Activated naive CD4-positive, alpha-beta T cell treated with anti-CD3 and anti-CD28 coated beads for 36 hours (primary cell): ENCODE measurements at regions of chr3 and their contacts with region 1.

Region 1: GRCh38 chr3:151918253-151919029 is 45.0 kb downstream of the SUCNR1 start:
- DNase-seq: no peak
- H3K4me3 Mint-ChIP-seq: no peak overlapping the region
- H3K27ac Mint-ChIP-seq: no peak overlapping the region
- H3K4me1 Mint-ChIP-seq: no peaks in the 10 kb centered on the region
- H3K27me3 Mint-ChIP-seq: no peaks in the 10 kb centered on the region

Region 2: GRCh38 chr3:151439652-151440129 is 478.8 kb before region 1 on chr3:
- CTCF ChIA-PET with region 1: interaction called, 11 read pairs
- intact Hi-C with region 1: loop called (anchors 1 kb)
- DNase-seq: no peak
- H3K4me3 Mint-ChIP-seq: no peak overlapping the region
- H3K27ac Mint-ChIP-seq: no peak overlapping the region
- H3K4me1 Mint-ChIP-seq: no peaks in the 10 kb centered on the region
- H3K27me3 Mint-ChIP-seq: peaks cover 2% of the 10 kb centered on the region

Region 3: GRCh38 chr3:151468284-151468917 is 450.0 kb before region 1 on chr3:
- CTCF ChIA-PET with region 1: interaction called, 4 read pairs
- intact Hi-C with region 1: loop called (anchors 1 kb)
- DNase-seq: peak; percentile 40
- H3K4me3 Mint-ChIP-seq: no peak overlapping the region
- H3K27ac Mint-ChIP-seq: no peak overlapping the region
- H3K4me1 Mint-ChIP-seq: no peaks in the 10 kb centered on the region
- H3K27me3 Mint-ChIP-seq: peaks cover 4% of the 10 kb centered on the region

Region 4: DNA sequence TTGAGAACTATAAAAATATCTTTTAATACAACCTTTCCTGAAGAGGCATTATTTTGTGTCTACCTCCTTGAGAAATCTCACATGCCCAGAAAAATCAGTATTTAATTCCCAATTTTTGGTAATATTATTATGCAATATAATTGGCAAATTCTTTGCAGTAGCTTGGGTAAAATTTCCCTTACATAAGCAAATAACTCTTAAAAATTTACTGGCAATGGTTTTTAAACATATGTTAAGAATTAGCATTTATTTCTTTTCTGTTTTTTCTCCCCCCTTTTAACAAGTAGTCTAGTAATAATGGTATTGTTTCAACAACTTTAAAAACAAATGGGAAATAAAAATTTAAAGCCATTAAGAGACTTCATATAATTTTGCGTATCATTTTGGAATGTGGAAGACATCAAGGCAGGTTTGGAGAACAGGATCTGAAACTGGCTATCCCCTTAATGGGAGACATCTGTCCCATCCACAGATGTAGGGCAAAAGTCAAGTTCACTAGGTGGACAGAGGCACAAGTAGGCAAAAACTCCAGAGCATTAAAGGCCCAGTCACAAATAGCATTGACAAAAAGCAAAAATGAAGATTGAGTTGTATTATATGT is 274.3 kb before region 1 on chr3:
- CTCF ChIA-PET with region 1: no interaction called
- intact Hi-C with region 1: loop called (anchors 10 kb)
- DNase-seq: no peak
- H3K4me3 Mint-ChIP-seq: no peak overlapping the region
- H3K27ac Mint-ChIP-seq: no peak overlapping the region
- H3K4me1 Mint-ChIP-seq: no peaks in the 10 kb centered on the region
- H3K27me3 Mint-ChIP-seq: peaks cover 6% of the 10 kb centered on the region

Region 5: GRCh38 chr3:151838583-151839312 is 79.7 kb before region 1 on chr3:
- CTCF ChIA-PET with region 1: interaction called, 6 read pairs
- intact Hi-C with region 1: loop called (anchors 1 kb)
- DNase-seq: peak; percentile 53
- H3K4me3 Mint-ChIP-seq: no peak overlapping the region
- H3K27ac Mint-ChIP-seq: no peak overlapping the region
- H3K4me1 Mint-ChIP-seq: peaks cover 2% of the 10 kb centered on the region
- H3K27me3 Mint-ChIP-seq: no peaks in the 10 kb centered on the region

Region 6: DNA sequence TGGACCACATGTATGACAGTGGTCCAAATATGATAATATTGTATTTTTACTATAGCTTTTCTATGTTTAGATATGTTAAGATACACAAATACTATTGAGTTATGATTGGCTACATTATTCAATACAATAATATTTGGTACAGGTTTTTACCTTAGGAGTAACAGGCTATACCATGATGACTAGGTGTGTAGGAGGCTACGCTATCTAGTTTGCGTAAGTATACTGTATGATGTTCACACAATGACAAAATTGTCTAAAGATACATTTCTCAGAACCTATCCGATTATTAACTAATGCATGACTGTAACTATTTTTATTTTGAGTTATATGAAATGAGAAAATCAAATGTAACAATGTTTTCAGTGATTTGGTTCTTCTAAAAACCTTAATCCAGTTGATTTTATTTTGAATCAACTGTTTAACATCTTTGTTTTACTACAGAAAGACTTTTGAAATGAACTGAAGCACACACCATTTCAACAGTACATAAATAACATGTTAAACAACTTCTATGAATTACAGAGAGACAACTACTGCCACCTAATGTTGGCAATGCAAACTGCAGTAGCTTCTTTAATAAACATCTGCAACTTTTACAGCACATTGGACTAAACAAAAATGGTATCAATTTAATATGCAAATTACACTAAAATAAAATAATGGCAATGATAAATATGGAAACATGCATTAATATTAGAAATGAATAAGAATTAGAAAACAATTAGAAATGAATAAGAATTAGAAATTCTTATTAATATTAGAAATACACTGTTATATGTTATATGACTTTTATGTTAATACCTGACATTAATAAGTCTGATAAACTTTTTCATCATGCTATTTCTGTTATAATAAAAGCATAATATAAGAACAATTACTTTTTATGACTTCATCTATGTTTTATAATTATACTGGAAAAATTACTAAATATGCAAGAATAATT is 606.0 kb after region 1 on chr3:
- CTCF ChIA-PET with region 1: no interaction called
- intact Hi-C with region 1: loop called (anchors 10 kb)
- DNase-seq: peak; percentile 74
- H3K4me3 Mint-ChIP-seq: no peak overlapping the region
- H3K27ac Mint-ChIP-seq: no peak overlapping the region
- H3K4me1 Mint-ChIP-seq: no peaks in the 10 kb centered on the region
- H3K27me3 Mint-ChIP-seq: no peaks in the 10 kb centered on the region